ENCODE measurements at regions of chr12 and their contacts with region 1.

Region 1: GRCh38 chr12:56224102-56224701 is at the start of gene NABP2:
- DNase-seq: peak; percentile 78 to 97 (median 81)
- ATAC-seq: peak; percentile 85
- H3K4me3 ChIP-seq: peak within 1 kb of the TSS; percentile 82
- H3K4me3 Mint-ChIP-seq: peak within 1 kb of the TSS; percentile 77 to 99 (median 87)
- H3K27ac ChIP-seq: peak within 1 kb of the TSS; percentile 98
- H3K27ac Mint-ChIP-seq: peak within 1 kb of the TSS; percentile 78 to 100 (median 91)
- H3K4me1 ChIP-seq: peaks cover 22 to 27% of the 10 kb centered on the region in 2 donors
- H3K4me1 Mint-ChIP-seq: peaks cover 16 to 57% (median 46%) of the 10 kb centered on the region in 7 donors
- H3K27me3 ChIP-seq: no peaks in the 10 kb centered on the region
- H3K27me3 Mint-ChIP-seq: peaks cover 0 to 3% (median 0%) of the 10 kb centered on the region in 5 donors
- total RNA-seq, gene NABP2: 9.2 to 61.2 (median 11.8) TPM

Region 2: GRCh38 chr12:55642669-55643068 is 581.5 kb before region 1 on chr12:
- CTCF ChIA-PET with region 1: no interaction called
- POLR2A ChIA-PET with region 1: no interaction called
- intact Hi-C with region 1: no loop called
- DNase-seq: no peak
- ATAC-seq: no peak
- H3K4me3 ChIP-seq: no peak overlapping the region
- H3K4me3 Mint-ChIP-seq: no peak overlapping the region
- H3K27ac ChIP-seq: no peak overlapping the region
- H3K27ac Mint-ChIP-seq: peak overlapping the region in 1 of 9 donors; percentile 16
- H3K4me1 ChIP-seq: peaks cover 0 to 4% of the 10 kb centered on the region in 2 donors
- H3K4me1 Mint-ChIP-seq: peaks cover 21 to 30% (median 24%) of the 10 kb centered on the region in 7 donors
- H3K27me3 ChIP-seq: no peaks in the 10 kb centered on the region
- H3K27me3 Mint-ChIP-seq: peaks cover 0 to 5% (median 2%) of the 10 kb centered on the region in 5 donors

Region 3: GRCh38 chr12:56104109-56104814 is 119.9 kb before region 1 on chr12 and contains the start of gene PA2G4:
- CTCF ChIA-PET with region 1: interaction called, 3 read pairs
- POLR2A ChIA-PET with region 1: interaction called, 11 read pairs
- intact Hi-C with region 1: loop called in 1 of 2 experiments (anchors 1 kb)
- DNase-seq: peak; percentile 83 to 97 (median 96)
- ATAC-seq: peak; percentile 93
- H3K4me3 ChIP-seq: peak within 1 kb of the TSS; percentile 87
- H3K4me3 Mint-ChIP-seq: peak within 1 kb of the TSS; percentile 91 to 100 (median 98)
- H3K27ac ChIP-seq: peak within 1 kb of the TSS; percentile 82
- H3K27ac Mint-ChIP-seq: peak within 1 kb of the TSS; percentile 92 to 99 (median 98)
- H3K4me1 ChIP-seq: peaks cover 36 to 37% of the 10 kb centered on the region in 2 donors
- H3K4me1 Mint-ChIP-seq: peaks cover 31 to 69% (median 64%) of the 10 kb centered on the region in 7 donors
- H3K27me3 ChIP-seq: no peaks in the 10 kb centered on the region
- H3K27me3 Mint-ChIP-seq: peaks cover 0 to under 1% (median 0%) of the 10 kb centered on the region in 5 donors
- total RNA-seq, gene PA2G4: 61.7 to 254 (median 109) TPM

Region 4: DNA sequence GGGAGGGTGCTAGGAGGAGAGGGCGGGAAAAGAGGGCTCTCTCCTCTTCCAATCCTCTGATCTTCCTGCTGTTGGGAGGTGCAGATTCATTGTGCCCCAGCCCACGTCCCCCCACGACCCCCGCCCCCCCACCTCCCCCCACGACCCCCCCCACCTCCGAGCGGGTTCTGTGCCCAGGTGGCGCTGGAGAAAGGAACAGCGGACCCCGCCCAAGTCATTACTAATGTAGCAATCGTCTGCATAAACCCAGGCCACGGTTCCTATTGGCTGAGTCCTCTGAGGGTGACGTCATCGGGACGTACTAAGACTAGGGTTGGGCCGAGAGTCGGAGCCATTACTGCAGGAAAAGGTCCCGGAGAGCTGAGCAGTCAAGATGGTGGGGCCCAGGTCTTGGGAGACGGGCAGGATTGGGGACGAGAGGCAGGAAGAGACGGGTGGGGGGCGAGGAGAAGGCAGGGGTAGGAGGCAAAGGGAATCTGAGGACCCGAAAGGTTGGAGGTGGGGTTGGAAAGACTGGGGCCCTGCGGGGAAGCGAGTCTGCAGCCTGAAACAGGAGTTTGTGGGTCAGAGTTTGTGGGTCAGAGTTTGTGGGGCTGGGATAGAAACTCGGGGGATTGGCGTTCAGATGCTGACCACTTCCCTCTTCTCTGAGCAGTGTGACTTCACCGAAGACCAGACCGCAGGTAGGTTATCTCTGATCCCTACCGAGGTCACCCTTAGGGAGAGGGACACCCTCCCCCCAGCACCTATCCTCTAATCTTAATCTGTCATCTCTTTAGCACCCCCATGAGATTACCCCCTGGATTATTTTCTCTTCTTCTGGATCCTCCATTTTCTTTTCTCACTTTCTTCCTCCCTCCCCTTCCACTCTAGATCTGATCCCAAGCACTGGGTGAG is 65.9 kb before region 1 on chr12 and contains the start of gene MYL6:
- CTCF ChIA-PET with region 1: interaction called, 3 read pairs
- POLR2A ChIA-PET with region 1: interaction called, 9 read pairs
- intact Hi-C with region 1: loop called (anchors 1 to 5 kb)
- DNase-seq: peak; percentile 58 to 97 (median 89)
- ATAC-seq: peak; percentile 91
- H3K4me3 ChIP-seq: peak within 1 kb of the TSS; percentile 89
- H3K4me3 Mint-ChIP-seq: peak within 1 kb of the TSS; percentile 94 to 99 (median 96)
- H3K27ac ChIP-seq: peak within 1 kb of the TSS; percentile 98
- H3K27ac Mint-ChIP-seq: peak within 1 kb of the TSS; percentile 88 to 99 (median 97)
- H3K4me1 ChIP-seq: peaks cover 24 to 26% of the 10 kb centered on the region in 2 donors
- H3K4me1 Mint-ChIP-seq: peaks cover 31 to 59% (median 54%) of the 10 kb centered on the region in 7 donors
- H3K27me3 ChIP-seq: no peaks in the 10 kb centered on the region
- H3K27me3 Mint-ChIP-seq: no peaks in the 10 kb centered on the region
- total RNA-seq, gene MYL6: 428 to 1,509 (median 467) TPM

Region 5: GRCh38 chr12:56258057-56258819 is 34.0 kb after region 1 on chr12 and contains the start of gene ANKRD52:
- CTCF ChIA-PET with region 1: interaction called, 10 read pairs
- POLR2A ChIA-PET with region 1: interaction called, 12 read pairs
- intact Hi-C with region 1: loop called (anchors 1 kb)
- DNase-seq: peak; percentile 69 to 92 (median 84)
- ATAC-seq: peak; percentile 99
- H3K4me3 ChIP-seq: peak within 1 kb of the TSS; percentile 99
- H3K4me3 Mint-ChIP-seq: peak within 1 kb of the TSS; percentile 87 to 97 (median 93)
- H3K27ac ChIP-seq: peak within 1 kb of the TSS; percentile 90
- H3K27ac Mint-ChIP-seq: peak within 1 kb of the TSS; percentile 83 to 94 (median 90)
- H3K4me1 ChIP-seq: peaks cover 18 to 19% of the 10 kb centered on the region in 2 donors
- H3K4me1 Mint-ChIP-seq: peaks cover 13 to 27% (median 22%) of the 10 kb centered on the region in 7 donors
- H3K27me3 ChIP-seq: no peaks in the 10 kb centered on the region
- H3K27me3 Mint-ChIP-seq: peaks cover 0 to 2% (median 0%) of the 10 kb centered on the region in 5 donors
- total RNA-seq, gene ANKRD52: 26.9 to 64.4 (median 40.7) TPM

Region 6: GRCh38 chr12:56333679-56334489 is 109.7 kb after region 1 on chr12 and contains the start of gene PAN2:
- CTCF ChIA-PET with region 1: interaction called, 3 read pairs
- POLR2A ChIA-PET with region 1: interaction called, 7 read pairs
- intact Hi-C with region 1: loop called in 1 of 2 experiments (anchors 5 kb)
- DNase-seq: peak; percentile 74 to 94 (median 92)
- ATAC-seq: peak; percentile 90
- H3K4me3 ChIP-seq: peak within 1 kb of the TSS; percentile 93
- H3K4me3 Mint-ChIP-seq: peak within 1 kb of the TSS; percentile 89 to 99 (median 95)
- H3K27ac ChIP-seq: peak within 1 kb of the TSS; percentile 98
- H3K27ac Mint-ChIP-seq: peak within 1 kb of the TSS; percentile 97 to 100 (median 99)
- H3K4me1 ChIP-seq: peaks cover 27 to 30% of the 10 kb centered on the region in 2 donors
- H3K4me1 Mint-ChIP-seq: peaks cover 16 to 66% (median 48%) of the 10 kb centered on the region in 7 donors
- H3K27me3 ChIP-seq: no peaks in the 10 kb centered on the region
- H3K27me3 Mint-ChIP-seq: peaks cover 0 to 2% (median 0%) of the 10 kb centered on the region in 5 donors
- total RNA-seq, gene PAN2: 65.8 to 279 (median 144) TPM

Region 7: DNA sequence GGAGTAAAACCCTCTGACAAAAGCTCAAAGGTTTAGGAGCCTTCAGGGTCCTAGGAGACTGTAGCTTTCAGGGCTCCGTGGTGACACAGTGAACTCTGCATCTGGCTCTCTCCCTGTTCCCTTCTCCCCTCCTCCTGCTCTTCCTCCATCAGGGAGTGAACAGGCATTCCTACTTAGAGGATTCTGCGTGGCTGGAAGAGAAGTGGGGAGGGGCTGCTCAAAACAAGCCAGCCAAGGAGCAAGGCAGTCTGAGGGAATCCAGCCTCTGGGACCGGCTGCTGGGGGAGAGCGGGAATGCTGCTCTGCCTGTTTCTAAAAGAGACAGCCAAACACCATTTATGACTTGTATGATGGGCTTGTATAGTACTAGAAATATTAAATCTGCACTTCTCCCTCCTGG is 346.9 kb after region 1 on chr12:
- CTCF ChIA-PET with region 1: no interaction called
- POLR2A ChIA-PET with region 1: no interaction called
- intact Hi-C with region 1: no loop called
- DNase-seq: no peak
- ATAC-seq: no peak
- H3K4me3 ChIP-seq: no peak overlapping the region
- H3K4me3 Mint-ChIP-seq: peak overlapping the region in 2 of 10 donors; percentile 23 to 49
- H3K27ac ChIP-seq: no peak overlapping the region
- H3K27ac Mint-ChIP-seq: peak overlapping the region in 3 of 9 donors; percentile 15 to 67 (median 28)
- H3K4me1 ChIP-seq: peaks cover 0 to 22% of the 10 kb centered on the region in 2 donors
- H3K4me1 Mint-ChIP-seq: peaks cover 9 to 31% (median 23%) of the 10 kb centered on the region in 7 donors
- H3K27me3 ChIP-seq: no peaks in the 10 kb centered on the region
- H3K27me3 Mint-ChIP-seq: no peaks in the 10 kb centered on the region

Region 8: GRCh38 chr12:57088459-57089248 is 864.5 kb after region 1 on chr12 and contains the start of gene NAB2:
- CTCF ChIA-PET with region 1: no interaction called
- POLR2A ChIA-PET with region 1: no interaction called
- intact Hi-C with region 1: loop called in 1 of 2 experiments (anchors 5 kb)
- DNase-seq: peak; percentile 79 to 91 (median 88)
- ATAC-seq: peak; percentile 84
- H3K4me3 ChIP-seq: peak within 1 kb of the TSS; percentile 94
- H3K4me3 Mint-ChIP-seq: peak within 1 kb of the TSS; percentile 94 to 98 (median 96)
- H3K27ac ChIP-seq: peak within 1 kb of the TSS; percentile 100
- H3K27ac Mint-ChIP-seq: peak within 1 kb of the TSS; percentile 94 to 99 (median 97)
- H3K4me1 ChIP-seq: peaks cover 23 to 46% of the 10 kb centered on the region in 2 donors
- H3K4me1 Mint-ChIP-seq: peaks cover 40 to 68% (median 58%) of the 10 kb centered on the region in 7 donors
- H3K27me3 ChIP-seq: no peaks in the 10 kb centered on the region
- H3K27me3 Mint-ChIP-seq: no peaks in the 10 kb centered on the region
- total RNA-seq, gene NAB2: 5.7 to 22.4 (median 15.5) TPM